IMR-90 (cell line): ENCODE measurements at regions of chr5 and their contacts with region 1.

Region 1: GRCh38 chr5:150217873-150218692 is 28.2 kb downstream of the SLC6A7 start:
- DNase-seq: peak; percentile 79
- ATAC-seq: peak; percentile 96
- H3K4me3 ChIP-seq: no peak overlapping the region
- H3K27ac ChIP-seq: no peak overlapping the region
- H3K4me1 ChIP-seq: no peaks in the 10 kb centered on the region
- H3K27me3 ChIP-seq: no peaks in the 10 kb centered on the region; the same call in 1 of the 2 replicates
- CTCF ChIP-seq: peak; percentile 92
- POLR2A ChIP-seq: no peak
- RAD21 ChIP-seq: peak; percentile 96

Region 2: DNA sequence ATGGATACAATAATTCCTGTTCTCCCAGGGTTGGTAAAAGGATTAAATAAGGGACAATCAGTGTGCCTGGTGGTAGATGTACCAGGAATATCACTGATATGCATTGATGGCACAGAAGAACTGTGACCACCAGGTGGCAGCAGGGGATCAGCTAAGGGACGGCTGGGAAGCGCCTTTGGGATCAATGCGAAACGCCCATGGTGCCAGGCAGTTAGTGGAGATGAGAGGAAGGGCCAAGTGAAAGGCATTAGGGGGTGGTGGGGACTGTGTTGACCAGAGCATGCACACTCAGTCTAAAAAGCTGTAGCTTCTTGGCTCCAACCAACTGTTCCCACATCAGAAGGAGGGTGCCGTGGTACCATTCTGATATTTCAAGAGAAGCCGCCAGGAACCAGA is 581.2 kb before region 1 on chr5:
- CTCF ChIA-PET with region 1: no interaction called
- POLR2A ChIA-PET with region 1: no interaction called
- dilution Hi-C with region 1: no loop called
- in situ Hi-C with region 1: loop called (anchors 25 kb)
- intact Hi-C with region 1: no loop called
- DNase-seq: peak; percentile 62
- ATAC-seq: peak; percentile 83
- H3K4me3 ChIP-seq: no peak overlapping the region
- H3K27ac ChIP-seq: no peak overlapping the region
- H3K4me1 ChIP-seq: peaks cover 9% of the 10 kb centered on the region
- H3K27me3 ChIP-seq: peaks cover 9% of the 10 kb centered on the region; the same call in 1 of the 2 replicates
- CTCF ChIP-seq: peak; percentile 80
- POLR2A ChIP-seq: no peak
- RAD21 ChIP-seq: peak; percentile 92

Region 3: DNA sequence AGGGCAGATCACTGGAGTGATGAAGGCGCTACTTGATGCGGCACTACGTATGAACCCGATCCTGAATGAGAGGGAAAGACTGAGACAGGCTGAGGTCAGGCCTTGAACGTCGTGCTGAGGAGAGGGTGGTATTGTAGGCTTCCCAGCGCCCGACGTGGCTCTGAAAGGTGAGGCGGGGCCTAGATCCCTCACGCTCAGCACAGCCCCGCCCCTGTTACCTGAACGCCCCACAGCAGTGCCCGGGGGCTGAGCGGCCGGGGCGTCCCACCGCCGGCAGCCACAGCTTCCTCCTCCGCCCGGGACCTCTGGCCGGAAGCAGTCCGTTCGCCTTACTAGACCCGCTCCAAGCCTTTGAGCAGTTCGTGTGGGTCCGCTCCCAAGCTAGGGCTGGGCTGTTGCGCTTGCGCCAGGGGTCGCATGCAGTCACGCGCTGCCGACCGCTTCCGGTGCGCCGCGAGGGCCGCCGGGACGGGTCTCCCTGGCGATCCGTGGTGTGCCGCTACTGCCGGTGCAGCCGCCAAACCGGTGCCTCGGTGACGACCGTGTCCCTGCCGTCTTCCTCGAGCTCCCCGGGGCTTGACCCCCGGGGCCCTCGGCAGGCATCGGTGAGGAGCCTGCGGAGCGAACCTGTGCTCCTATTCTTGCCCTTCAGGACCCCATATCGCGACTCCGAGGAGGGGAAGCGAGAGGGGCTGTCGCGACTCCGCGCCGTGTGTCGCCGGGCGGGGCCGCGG is 217.7 kb before region 1 on chr5 and contains the starts of genes HMGXB3 and TIGD6:
- CTCF ChIA-PET with region 1: no interaction called
- POLR2A ChIA-PET with region 1: interaction called, 4 read pairs
- dilution Hi-C with region 1: no loop called
- in situ Hi-C with region 1: loop called (anchors 10 kb)
- intact Hi-C with region 1: loop called (anchors 1 kb)
- DNase-seq: peak; percentile 95
- ATAC-seq: peak; percentile 88
- H3K4me3 ChIP-seq: peak within 1 kb of the TSS; percentile 62
- H3K27ac ChIP-seq: peak within 1 kb of the TSS; percentile 75
- H3K4me1 ChIP-seq: no peaks in the 10 kb centered on the region; the same call in 1 of the 2 replicates
- H3K27me3 ChIP-seq: no peaks in the 10 kb centered on the region
- CTCF ChIP-seq: no peak
- POLR2A ChIP-seq: peak; percentile 92
- RAD21 ChIP-seq: no peak; the same call in 1 of the 2 replicates
- total RNA-seq, gene HMGXB3: 27.6 and 29.2 TPM in 2 replicates
- total RNA-seq, gene TIGD6: 6.1 and 6.6 TPM in 2 replicates

Region 4: DNA sequence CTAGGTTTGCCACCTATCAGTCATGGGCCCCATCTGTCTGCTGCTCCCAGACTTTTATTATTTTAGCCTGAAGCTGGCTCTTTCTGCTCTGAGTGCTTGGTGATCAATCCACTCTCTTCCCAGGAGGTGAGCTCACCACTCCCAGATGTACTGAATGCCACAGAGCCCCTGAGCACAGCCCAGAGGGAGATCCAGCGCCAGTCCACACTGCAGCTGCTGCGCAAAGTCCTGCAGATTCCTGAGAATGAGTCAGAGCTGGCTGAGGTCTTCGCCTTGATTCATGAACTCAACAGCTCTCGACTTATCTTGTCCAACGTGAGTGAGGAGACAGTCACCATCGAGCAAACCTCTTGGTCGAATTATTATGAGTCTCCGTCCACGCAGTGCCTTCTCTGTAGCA is 181.6 kb before region 1 on chr5:
- CTCF ChIA-PET with region 1: interaction called, 3 read pairs
- POLR2A ChIA-PET with region 1: no interaction called
- dilution Hi-C with region 1: no loop called
- in situ Hi-C with region 1: no loop called
- intact Hi-C with region 1: loop called (anchors 10 kb)
- DNase-seq: peak; percentile 99
- ATAC-seq: peak; percentile 98
- H3K4me3 ChIP-seq: no peak overlapping the region
- H3K27ac ChIP-seq: no peak overlapping the region
- H3K4me1 ChIP-seq: 0 out of 2 replicates have a peak, but pooled peaks cover 4% of the 10 kb centered on the region
- H3K27me3 ChIP-seq: no peaks in the 10 kb centered on the region
- CTCF ChIP-seq: no peak
- POLR2A ChIP-seq: no peak
- RAD21 ChIP-seq: peak; percentile 37

Region 5: DNA sequence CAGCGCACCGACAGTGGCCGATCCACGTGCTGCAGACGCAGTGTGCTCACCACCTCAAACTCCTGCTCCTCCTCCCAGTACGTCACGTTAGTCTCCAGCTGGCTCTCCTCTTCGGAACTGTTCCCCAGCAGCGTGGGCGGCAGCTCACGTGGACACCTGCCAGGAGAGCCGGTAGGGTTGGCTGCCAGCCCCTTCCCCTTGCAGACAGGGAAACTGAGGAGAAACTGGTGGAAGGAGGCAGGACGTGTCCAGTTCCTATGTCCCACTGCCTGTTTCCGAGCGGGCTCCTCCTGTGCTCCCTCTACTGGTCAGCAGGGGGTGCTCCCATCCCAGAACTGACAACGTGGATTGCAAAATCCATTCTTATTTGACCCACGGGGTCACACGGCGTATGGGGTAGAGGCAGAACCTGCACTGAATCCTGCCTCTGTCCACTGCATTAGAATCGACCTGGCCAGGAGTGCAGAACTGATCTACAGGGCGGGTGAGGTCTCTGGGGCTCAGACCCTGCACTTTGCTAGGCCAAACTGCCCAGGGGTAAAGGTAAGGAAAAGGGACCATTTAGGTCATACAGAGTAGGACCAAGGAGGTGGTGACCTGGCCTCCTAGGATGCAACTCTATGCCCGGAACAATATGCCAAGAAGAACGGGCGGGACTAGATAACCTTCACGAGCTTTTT is 88.1 kb before region 1 on chr5:
- CTCF ChIA-PET with region 1: no interaction called
- POLR2A ChIA-PET with region 1: no interaction called
- dilution Hi-C with region 1: no loop called
- in situ Hi-C with region 1: loop called (anchors 5 kb)
- intact Hi-C with region 1: loop called (anchors 1 kb)
- DNase-seq: peak; percentile 78
- ATAC-seq: peak; percentile 87
- H3K4me3 ChIP-seq: no peak overlapping the region
- H3K27ac ChIP-seq: 0 out of 2 replicates have a peak overlapping the region, but pooled peaks have one; percentile 18
- H3K4me1 ChIP-seq: peaks cover 31% of the 10 kb centered on the region
- H3K27me3 ChIP-seq: no peaks in the 10 kb centered on the region
- CTCF ChIP-seq: peak; percentile 92
- POLR2A ChIP-seq: peak; percentile 42; the same call in 1 of the 2 replicates
- RAD21 ChIP-seq: peak; percentile 96

Region 6: DNA sequence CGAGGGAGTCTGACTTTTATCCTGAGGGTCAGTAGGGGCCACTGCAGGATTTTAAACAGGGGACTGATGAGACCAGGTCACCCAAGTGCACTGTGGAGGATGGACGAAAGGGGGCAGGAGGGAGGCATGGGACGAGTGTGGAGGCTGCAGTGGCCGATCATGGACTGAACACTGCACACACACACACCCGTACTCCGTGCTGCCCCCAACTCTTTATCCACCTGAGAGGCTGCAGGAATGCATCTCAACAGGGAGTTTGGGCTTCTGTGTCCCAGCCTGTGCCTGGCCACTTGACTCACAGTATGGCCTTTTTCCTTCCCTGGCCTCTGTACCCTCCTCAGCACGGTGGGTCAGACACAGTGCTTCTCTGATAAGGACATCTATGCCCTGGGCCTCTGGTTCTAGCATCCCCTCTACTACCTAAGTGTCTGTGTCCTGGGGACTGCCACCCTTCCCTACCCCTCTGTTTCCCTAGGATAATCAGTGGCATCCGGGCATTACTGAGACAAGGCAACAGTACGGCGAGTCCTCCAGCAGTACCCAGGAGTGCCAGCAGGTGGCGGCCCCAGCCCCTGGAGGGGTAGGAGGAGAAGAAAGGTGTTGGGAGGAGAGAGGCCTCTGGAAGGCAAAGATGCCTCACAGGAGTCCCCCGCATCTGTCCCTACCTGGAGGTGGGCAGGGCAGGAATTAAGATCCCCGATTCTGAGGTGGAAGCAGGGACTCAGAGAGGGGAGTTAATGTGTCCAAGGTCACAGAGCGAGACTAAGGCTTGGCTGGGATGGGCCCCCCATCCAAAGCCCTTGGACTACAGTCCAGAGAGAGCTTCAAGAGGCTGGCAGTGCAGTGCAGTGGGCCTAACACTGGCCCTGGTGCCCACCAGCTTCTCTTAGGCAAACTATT is 56.6 kb before region 1 on chr5:
- CTCF ChIA-PET with region 1: interaction called, 3 read pairs
- POLR2A ChIA-PET with region 1: no interaction called
- dilution Hi-C with region 1: no loop called
- in situ Hi-C with region 1: no loop called
- intact Hi-C with region 1: loop called (anchors 1 kb)
- DNase-seq: peak; percentile 65
- ATAC-seq: peak; percentile 91
- H3K4me3 ChIP-seq: no peak overlapping the region
- H3K27ac ChIP-seq: no peak overlapping the region
- H3K4me1 ChIP-seq: peaks cover 26% of the 10 kb centered on the region
- H3K27me3 ChIP-seq: no peaks in the 10 kb centered on the region
- CTCF ChIP-seq: peak; percentile 94
- POLR2A ChIP-seq: peak; percentile 8; the same call in 1 of the 2 replicates
- RAD21 ChIP-seq: peak; percentile 91

Region 7: DNA sequence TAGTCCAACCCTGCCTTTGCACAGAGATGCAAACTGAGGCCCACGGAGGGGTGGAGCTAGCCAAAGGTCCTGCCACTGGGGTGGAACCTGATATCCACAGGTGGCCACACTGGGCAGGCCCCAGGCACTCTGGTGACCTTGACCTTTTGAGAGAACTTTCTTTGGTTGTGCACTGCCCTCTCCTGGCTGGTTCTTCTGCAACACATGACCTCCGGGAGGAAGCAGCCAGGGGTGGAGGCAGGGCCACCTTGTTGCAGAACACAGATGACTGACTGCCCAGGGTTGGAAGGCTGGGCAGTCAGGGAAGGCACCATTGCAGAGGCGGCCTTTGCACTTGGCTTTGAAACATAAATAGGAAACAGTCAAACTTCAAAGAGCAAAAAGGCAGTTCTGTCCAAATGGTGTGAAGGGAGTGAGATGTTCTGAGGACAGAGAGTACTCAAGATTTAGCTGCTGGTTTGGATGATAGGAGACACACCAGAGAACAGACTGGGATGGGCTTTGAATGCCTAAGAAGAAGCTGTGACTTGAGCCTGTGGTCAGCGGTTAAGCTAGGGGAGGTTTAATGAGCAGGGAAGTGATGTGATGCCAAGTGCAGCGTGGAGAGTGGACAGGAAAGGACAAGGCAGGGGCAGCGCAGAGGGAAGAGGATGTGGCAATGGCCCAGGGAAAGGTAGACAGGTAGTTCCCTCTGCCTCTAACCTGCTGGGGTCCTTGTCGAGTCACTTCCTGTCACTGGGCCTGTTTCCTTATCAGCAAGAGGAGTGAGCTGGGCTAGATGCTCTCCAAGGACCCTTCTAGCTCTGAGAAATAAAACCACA is 132.7 kb after region 1 on chr5:
- CTCF ChIA-PET with region 1: interaction called, 3 read pairs
- POLR2A ChIA-PET with region 1: no interaction called
- dilution Hi-C with region 1: no loop called
- in situ Hi-C with region 1: no loop called
- intact Hi-C with region 1: loop called (anchors 1 kb)
- DNase-seq: peak; percentile 71
- ATAC-seq: peak; percentile 98
- H3K4me3 ChIP-seq: no peak overlapping the region
- H3K27ac ChIP-seq: no peak overlapping the region
- H3K4me1 ChIP-seq: no peaks in the 10 kb centered on the region
- H3K27me3 ChIP-seq: no peaks in the 10 kb centered on the region
- CTCF ChIP-seq: peak; percentile 83
- POLR2A ChIP-seq: no peak
- RAD21 ChIP-seq: peak; percentile 87